ENCODE measurements at regions of chr4 and their contacts with region 1.

Region 1: DNA sequence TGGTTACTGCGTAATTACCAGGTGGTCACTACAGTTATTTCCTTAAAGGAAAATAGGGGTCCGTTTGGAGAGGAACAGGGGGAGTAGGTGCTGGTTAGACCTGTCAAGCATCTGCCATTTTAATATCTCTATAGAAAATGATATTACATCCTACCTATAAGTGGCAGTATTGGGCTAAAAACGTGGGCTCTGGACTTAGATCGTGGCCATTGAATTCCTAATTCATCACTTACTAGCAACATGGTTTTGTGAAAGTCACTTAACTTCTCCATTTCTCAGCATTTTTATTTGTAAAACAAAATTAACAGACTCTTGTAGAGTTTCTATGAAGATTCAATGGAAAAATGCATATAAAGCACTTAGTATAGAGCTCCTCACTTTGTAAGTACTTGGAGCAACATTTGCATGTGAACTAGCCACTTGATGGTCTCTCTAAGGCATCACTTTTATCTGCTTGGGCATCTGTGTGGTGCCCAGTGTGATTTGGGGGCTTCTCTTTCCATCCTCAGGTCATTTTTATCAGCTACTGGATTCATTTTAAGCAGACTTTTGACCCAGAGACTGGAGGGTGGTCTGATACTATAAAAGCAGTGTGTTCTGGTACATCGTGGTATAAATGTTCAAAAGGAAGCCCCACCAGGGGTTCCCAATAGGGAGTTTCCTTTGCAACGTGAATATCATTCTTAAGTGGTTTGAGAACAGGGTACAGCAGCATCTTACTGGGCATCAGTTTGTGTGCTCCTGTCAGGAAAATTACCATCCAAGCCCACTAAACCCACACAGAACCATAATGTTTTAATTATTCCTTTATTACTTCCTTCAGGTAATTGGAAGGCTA is 42.7 kb upstream of the RASSF6 start:
- DNase-seq: no peak
- ATAC-seq: peak; percentile 66 to 80
- H3K4me3 ChIP-seq: no peak overlapping the region
- H3K27ac ChIP-seq: no peak overlapping the region
- H3K4me1 ChIP-seq: no peaks in the 10 kb centered on the region
- H3K27me3 ChIP-seq: no peaks in the 10 kb centered on the region

Region 2: GRCh38 chr4:73718375-73719373 is 55.7 kb after region 1 on chr4:
- intact Hi-C with region 1: no loop called
- DNase-seq: no peak
- ATAC-seq: no peak
- H3K4me3 ChIP-seq: no peak overlapping the region
- H3K27ac ChIP-seq: no peak overlapping the region
- H3K4me1 ChIP-seq: no peaks in the 10 kb centered on the region
- H3K27me3 ChIP-seq: no peaks in the 10 kb centered on the region

Region 3: DNA sequence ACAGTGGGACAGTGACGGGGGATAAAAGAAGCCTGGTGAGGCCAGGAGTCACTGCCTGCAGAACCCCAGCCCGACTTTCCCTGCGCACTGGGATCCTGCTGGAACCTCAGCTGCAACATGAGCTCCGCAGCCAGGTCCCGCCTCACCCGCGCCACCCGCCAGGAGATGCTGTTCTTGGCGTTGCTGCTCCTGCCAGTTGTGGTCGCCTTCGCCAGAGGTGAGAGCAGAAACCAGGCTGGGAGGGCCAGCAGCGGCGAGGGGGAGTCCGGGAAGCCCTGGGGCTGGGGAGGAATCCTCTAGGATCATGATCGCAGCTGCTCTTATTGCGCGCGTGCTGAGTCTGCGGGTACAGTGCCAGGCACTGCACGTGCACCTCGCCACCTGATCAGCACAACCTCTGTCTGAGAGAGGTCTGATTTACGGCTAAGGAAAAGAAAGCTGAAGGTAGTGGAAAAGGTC is 190.3 kb after region 1 on chr4 and contains the start of gene PF4V1:
- intact Hi-C with region 1: no loop called
- DNase-seq: peak; percentile 38 to 75 (median 74)
- ATAC-seq: peak; percentile 47 to 48
- H3K4me3 ChIP-seq: no peak within 1 kb of the TSS
- H3K27ac ChIP-seq: no peak within 1 kb of the TSS
- H3K4me1 ChIP-seq: peaks cover 3% of the 10 kb centered on the region
- H3K27me3 ChIP-seq: no peaks in the 10 kb centered on the region
- total RNA-seq, gene PF4V1: not detected

Region 4: DNA sequence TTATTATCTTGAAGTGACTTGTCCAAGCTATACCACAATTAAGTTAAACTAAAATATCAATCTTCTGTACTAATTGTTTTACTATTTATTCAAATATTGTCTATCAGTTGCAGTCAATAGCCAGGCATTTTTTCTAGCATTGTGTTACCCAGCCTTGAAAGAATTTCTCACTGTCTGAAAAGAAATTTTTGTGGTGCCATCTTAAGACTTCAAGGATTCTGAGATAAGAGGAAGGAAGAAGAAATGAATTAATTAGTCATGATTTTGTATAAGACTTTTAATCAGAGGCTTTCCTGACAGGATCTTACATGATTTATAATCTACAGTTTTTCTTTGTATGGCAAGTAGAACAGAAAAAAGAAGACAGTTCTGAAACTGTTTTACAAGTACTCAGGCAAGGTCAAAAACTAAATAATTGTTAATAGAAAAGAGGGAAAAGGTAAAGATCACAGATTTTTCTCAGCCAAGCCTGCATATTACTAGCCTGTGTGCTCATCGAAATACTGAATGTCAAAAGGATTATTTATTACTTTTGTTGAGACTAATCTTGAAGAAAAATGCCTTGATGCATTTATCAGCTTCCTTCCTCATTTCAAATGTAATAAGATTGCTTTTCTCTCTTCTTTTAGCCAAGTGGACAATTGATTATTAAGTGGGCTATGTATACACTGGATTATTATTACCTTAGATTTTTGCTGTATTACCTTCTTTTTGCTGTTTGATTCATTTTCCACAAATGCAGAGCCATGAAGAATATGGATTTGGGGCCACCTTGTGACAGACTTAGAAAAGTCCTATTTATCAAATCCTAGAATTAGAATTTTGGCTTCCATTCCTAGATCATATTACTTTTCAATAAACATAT is 260.1 kb after region 1 on chr4:
- intact Hi-C with region 1: loop called in 2 of 4 experiments (anchors 5 to 10 kb)
- DNase-seq: no peak
- ATAC-seq: no peak
- H3K4me3 ChIP-seq: no peak overlapping the region
- H3K27ac ChIP-seq: no peak overlapping the region
- H3K4me1 ChIP-seq: no peaks in the 10 kb centered on the region
- H3K27me3 ChIP-seq: no peaks in the 10 kb centered on the region